Psoas muscle (tissue), 8 donors: ENCODE measurements at regions of chr2 and their contacts with region 1.

Region 1: GRCh38 chr2:110167326-110168000 is 37.4 kb downstream of the NPHP1 start:
- DNase-seq: no peak
- ATAC-seq: no peak
- H3K4me3 ChIP-seq: peak overlapping the region; percentile 71
- H3K27ac ChIP-seq: peak overlapping the region; percentile 88
- H3K4me1 ChIP-seq: peaks cover 27% of the 10 kb centered on the region
- H3K27me3 ChIP-seq: no peaks in the 10 kb centered on the region
- CTCF ChIP-seq: no peak

Region 2: GRCh38 chr2:110113961-110114591 is 53.4 kb before region 1 on chr2:
- intact Hi-C with region 1: no loop called
- DNase-seq: peak in 1 of 2 donors; percentile 29
- ATAC-seq: peak in 2 of 4 donors; percentile 26 to 34
- H3K4me3 ChIP-seq: peak overlapping the region; percentile 58
- H3K27ac ChIP-seq: peak overlapping the region; percentile 2
- H3K4me1 ChIP-seq: no peaks in the 10 kb centered on the region
- H3K27me3 ChIP-seq: peaks cover 0 to 36% (median 8%) of the 10 kb centered on the region in 3 donors
- CTCF ChIP-seq: no peak

Region 3: GRCh38 chr2:110124939-110125691 is 42.3 kb before region 1 on chr2:
- intact Hi-C with region 1: no loop called
- DNase-seq: no peak
- ATAC-seq: no peak
- H3K4me3 ChIP-seq: no peak overlapping the region
- H3K27ac ChIP-seq: no peak overlapping the region
- H3K4me1 ChIP-seq: no peaks in the 10 kb centered on the region
- H3K27me3 ChIP-seq: no peaks in the 10 kb centered on the region
- CTCF ChIP-seq: no peak

Region 4: GRCh38 chr2:110204780-110205385 is 37.4 kb after region 1 on chr2 and contains the start of gene NPHP1:
- intact Hi-C with region 1: loop called (anchors 5 kb)
- DNase-seq: peak; percentile 89 to 94
- ATAC-seq: peak; percentile 91 to 94 (median 93)
- H3K4me3 ChIP-seq: peak within 1 kb of the TSS; percentile 77
- H3K27ac ChIP-seq: peak within 1 kb of the TSS; percentile 88
- H3K4me1 ChIP-seq: peaks cover 19% of the 10 kb centered on the region
- H3K27me3 ChIP-seq: no peaks in the 10 kb centered on the region
- CTCF ChIP-seq: peak; percentile 2
- total RNA-seq, gene NPHP1: 10.3 to 17.7 (median 12.4) TPM